ENCODE measurements at regions of chr2 and their contacts with region 1.

Region 1: DNA sequence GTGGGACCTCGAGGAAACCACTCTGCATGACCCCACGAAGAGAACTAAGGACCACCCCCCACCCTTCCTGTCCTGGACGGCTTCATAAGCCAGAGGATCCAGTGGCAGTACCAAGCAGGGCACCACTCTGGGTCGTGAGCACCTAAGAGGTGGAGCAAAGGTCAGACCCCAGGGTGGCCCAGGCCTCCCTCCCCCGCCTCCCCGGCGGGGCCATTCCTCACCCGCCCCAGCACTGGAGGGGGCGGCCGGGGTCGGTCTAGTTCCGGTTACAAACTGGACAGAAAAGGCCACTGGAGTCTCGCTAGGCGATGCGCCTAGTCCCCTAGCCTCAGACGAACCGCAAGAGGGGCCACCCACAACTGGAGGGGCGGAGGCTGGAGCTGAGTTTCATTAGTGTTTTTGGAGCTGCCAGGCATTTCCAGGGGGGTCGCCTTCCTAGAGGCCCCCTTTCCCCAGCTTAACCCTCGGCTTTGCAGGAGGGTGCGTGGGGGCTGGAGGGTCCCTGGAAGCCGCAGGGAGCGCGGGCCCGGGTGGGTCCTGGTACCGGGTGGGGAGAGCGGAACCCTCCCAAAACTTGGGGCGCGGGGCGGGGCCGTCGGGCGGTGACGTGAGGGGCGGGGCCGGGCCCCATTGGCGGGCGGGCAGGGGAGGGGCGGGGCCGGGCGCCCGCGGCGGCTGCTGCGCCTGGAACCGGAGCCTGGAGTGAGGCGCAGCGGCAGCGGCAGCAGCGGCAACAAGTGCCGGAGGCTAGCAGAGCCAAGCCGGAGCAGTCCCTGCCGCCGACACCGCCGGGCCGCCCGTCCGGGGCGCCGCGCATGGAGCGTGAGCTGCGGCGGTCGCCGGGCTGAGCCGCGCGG is at the start of gene B3GNT2:
- DNase-seq: peak; percentile 96
- H3K4me3 ChIP-seq: peak within 1 kb of the TSS; percentile 85 to 98 (median 92)
- H3K27ac ChIP-seq: peak within 1 kb of the TSS; percentile 90 to 99 (median 96)
- H3K4me1 ChIP-seq: peaks cover 32 to 56% (median 45%) of the 10 kb centered on the region in 6 donors
- H3K27me3 ChIP-seq: no peaks in the 10 kb centered on the region
- CTCF ChIP-seq: no peak
- POLR2A ChIP-seq: peak in 2 of 3 donors; percentile 31 to 69
- total RNA-seq, gene B3GNT2: 21.3 to 40.3 (median 28.9) TPM

Region 2: DNA sequence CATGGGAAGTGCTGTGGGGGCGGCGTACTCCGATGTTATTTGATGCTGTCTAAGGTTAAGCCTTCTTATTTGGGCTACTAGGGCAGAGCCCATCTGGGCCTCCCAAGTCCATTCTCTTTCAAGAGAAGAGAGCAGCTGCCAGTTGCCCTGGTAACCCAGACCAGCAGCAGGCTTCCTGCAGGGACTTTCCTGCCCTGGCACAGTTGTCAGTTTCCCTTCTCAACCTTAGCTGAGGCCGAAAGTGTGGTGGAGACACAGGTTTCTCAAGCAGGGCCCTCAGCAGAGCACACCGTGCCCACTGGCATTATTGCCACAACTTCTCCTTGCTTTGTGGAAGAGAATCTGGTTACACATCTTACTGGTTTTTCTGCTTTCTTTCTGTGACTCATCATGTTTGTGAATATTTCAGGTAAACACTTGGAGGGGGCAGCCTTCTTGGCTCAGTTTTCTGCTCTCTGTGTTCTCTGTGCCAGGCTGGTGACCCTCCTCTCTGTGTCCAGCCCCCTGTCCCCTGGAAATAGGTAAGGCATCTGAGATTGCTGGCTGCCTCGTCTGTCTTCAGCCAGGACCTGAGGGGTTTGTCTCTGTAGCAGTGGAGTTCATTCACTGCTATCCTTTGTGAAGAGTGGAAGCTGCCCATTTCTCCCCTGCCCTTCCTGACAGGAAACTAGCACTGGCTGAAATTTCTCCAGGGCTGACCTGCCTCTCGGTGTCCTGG is 111.3 kb after region 1 on chr2:
- intact Hi-C with region 1: loop called (anchors 10 kb)
- DNase-seq: peak; percentile 83
- H3K4me3 ChIP-seq: peak overlapping the region in 1 of 8 donors; percentile 21
- H3K27ac ChIP-seq: peak overlapping the region; percentile 24 to 90 (median 85)
- H3K4me1 ChIP-seq: peaks cover 47 to 88% (median 78%) of the 10 kb centered on the region in 6 donors
- H3K27me3 ChIP-seq: no peaks in the 10 kb centered on the region
- CTCF ChIP-seq: no peak
- POLR2A ChIP-seq: no peak

Region 3: DNA sequence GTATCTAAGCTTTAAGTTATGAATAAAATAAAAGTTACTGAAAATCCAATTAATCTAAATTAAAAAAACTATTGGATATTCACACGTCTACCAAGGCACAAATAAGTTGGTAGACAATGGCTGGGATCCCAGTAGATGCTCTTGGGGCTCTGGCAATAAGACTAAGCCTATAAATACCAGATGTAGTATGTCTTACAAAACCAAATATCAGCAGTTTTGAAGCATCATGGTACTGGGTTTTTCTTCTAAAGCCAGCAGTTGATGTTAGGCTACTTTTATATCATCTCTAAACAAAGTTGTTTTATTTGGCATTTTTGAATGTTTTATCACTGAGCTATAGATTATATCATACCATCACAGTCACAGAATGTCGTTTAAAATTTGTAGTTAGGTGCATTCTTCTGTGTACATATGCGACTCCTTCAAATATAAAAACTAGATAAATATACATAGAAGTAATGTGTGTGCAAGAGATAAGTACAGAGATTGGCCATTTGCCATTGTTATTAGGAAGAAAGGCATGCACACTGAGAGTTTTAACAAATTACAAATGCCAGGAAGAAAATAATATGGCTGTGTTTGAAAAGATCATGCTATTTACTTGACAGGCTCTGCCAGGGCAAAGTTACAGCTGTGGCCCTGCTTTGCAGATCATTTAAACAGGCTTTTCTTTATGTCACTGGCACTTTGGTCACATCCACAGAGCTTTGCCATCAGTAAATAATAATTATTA is 332.0 kb after region 1 on chr2:
- intact Hi-C with region 1: no loop called
- DNase-seq: no peak
- H3K4me3 ChIP-seq: no peak overlapping the region
- H3K27ac ChIP-seq: no peak overlapping the region
- H3K4me1 ChIP-seq: no peaks in the 10 kb centered on the region
- H3K27me3 ChIP-seq: no peaks in the 10 kb centered on the region
- CTCF ChIP-seq: no peak
- POLR2A ChIP-seq: no peak

Measured in spleen (tissue), 13 donors.